ENCODE measurements at regions of chr9 and their contacts with region 1.

Region 1: DNA sequence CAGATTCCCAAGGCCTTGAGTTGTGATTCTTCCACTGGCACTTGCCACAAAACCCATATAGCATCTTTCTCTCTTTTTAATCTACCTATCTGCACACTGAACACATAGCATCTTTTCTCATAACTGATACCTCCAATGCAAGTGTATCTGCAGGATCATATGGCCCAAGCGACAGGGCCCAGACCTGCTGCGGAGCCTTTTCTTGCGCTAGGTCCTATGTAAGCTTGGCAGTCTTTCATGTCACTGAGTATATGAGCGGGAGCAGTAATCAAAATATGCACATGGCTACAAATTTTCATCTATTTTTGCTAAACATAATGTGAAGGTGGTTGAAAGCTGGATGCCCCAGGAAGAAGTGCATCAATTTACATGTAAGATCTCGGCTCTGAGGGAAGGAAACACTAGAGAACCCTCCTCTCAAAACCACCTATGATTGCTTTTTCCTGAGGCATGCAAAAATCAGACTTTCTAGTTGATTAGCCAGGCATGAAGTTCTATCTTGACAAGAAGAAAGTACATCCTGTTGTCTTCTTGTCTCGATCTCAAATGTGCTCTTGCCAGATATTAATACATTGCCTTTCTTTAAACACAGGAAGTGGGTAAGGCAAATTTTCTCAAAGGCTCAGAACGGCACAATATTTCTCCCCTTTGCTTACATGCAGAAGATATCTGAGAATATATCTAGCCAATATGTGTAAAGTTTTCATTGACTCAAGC is 26.9 kb upstream of the CEMIP2 start:
- DNase-seq: no peak
- H3K4me3 ChIP-seq: no peak overlapping the region
- H3K27ac ChIP-seq: no peak overlapping the region
- H3K4me1 ChIP-seq: no peaks in the 10 kb centered on the region
- H3K27me3 ChIP-seq: no peaks in the 10 kb centered on the region
- CTCF ChIP-seq: no peak

Region 2: DNA sequence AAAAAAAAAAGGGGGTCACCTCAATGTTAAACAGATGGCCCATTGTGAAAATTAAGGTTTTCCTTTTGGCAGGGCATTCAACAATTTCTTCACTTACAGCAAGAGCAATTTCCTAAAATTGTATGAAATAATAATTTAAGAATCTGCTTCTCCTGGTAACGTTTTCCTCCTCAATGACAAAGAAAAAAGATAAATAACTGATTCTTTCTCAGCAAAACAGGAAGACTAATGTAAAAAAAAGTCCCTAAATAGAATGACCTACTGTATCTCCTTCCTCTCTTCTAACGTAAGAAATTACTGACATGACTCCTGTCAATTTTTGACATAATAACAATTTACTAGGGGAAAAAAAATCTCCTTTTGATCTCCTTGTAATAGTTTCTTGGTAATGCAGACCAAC is 90.2 kb after region 1 on chr9:
- intact Hi-C with region 1: loop called (anchors 5 kb)
- DNase-seq: no peak
- H3K4me3 ChIP-seq: no peak overlapping the region
- H3K27ac ChIP-seq: no peak overlapping the region
- H3K4me1 ChIP-seq: peaks cover 0 to 11% of the 10 kb centered on the region in 2 donors
- H3K27me3 ChIP-seq: no peaks in the 10 kb centered on the region
- CTCF ChIP-seq: no peak

Measured in ascending aorta (tissue), 2 donors.